ENCODE measurements at regions of chr4 and their contacts with region 1.

Region 1: GRCh38 chr4:35102066-35102465 is 1142.2 kb downstream of the ARAP2 start:
- DNase-seq: no peak
- H3K4me3 ChIP-seq: no peak overlapping the region
- H3K27ac ChIP-seq: no peak overlapping the region
- H3K4me1 ChIP-seq: no peaks in the 10 kb centered on the region
- H3K27me3 ChIP-seq: no peaks in the 10 kb centered on the region
- CTCF ChIP-seq: no peak
- POLR2A ChIP-seq: no peak

Region 2: GRCh38 chr4:35063031-35063570 is 39.0 kb before region 1 on chr4:
- intact Hi-C with region 1: no loop called
- DNase-seq: no peak
- H3K4me3 ChIP-seq: no peak overlapping the region
- H3K27ac ChIP-seq: no peak overlapping the region
- H3K4me1 ChIP-seq: no peaks in the 10 kb centered on the region
- H3K27me3 ChIP-seq: no peaks in the 10 kb centered on the region
- CTCF ChIP-seq: no peak
- POLR2A ChIP-seq: no peak

Region 3: DNA sequence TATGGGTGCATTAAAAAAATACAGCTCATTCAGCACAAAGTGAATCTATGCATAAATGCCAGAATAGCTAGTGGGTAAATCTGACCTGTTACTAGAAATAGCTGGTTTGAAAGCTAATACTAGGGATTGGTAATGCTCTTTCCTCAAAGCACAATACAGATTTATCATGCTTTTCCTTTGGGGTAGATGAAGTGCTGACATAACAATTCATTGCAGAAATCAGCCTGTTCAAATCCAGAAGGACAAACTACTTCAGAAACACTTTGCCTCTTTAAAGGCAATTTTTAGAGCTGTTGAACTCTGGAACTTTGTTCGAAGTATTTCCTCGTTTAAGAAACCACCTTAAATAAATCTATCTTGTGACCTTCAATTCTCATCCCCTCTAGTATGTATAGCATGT is 184.4 kb after region 1 on chr4:
- intact Hi-C with region 1: loop called (anchors 5 kb)
- DNase-seq: no peak
- H3K4me3 ChIP-seq: no peak overlapping the region
- H3K27ac ChIP-seq: no peak overlapping the region
- H3K4me1 ChIP-seq: no peaks in the 10 kb centered on the region
- H3K27me3 ChIP-seq: no peaks in the 10 kb centered on the region
- CTCF ChIP-seq: no peak
- POLR2A ChIP-seq: no peak

Measured in breast epithelium (tissue), 4 donors.